ENCODE measurements at regions of chrX and their contacts with region 1.

Region 1: DNA sequence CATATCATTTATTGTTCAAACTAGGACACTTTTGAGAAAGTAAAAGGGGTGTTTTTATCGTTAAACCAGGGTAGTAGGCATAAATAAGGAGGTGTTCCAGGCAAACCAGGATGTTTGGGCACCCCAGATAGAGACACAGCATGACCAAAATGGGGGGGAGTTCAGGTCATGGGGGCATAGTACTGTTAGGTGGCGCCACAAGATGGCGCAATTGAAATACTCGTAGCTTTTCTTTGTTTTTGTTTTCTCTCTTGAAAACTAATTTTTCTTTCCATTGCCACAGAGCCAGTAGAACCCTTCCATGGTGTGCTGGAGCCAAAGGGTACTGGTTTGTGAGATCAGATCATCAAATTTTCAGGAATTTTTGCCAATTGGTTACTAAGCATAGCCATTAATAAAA is 283.4 kb downstream of the BCOR start:
- DNase-seq: no peak
- ATAC-seq: peak; percentile 25 to 40
- H3K4me3 ChIP-seq: no peak overlapping the region
- H3K27ac ChIP-seq: peak overlapping the region; percentile 52 to 74 (median 71)
- H3K4me1 ChIP-seq: peaks cover 5 to 6% of the 10 kb centered on the region in 2 donors
- H3K27me3 ChIP-seq: peaks cover 0 to 3% (median 0%) of the 10 kb centered on the region in 3 donors
- CTCF ChIP-seq: peak; percentile 23 to 55 (median 40)
- POLR2A ChIP-seq: no peak

Region 2: DNA sequence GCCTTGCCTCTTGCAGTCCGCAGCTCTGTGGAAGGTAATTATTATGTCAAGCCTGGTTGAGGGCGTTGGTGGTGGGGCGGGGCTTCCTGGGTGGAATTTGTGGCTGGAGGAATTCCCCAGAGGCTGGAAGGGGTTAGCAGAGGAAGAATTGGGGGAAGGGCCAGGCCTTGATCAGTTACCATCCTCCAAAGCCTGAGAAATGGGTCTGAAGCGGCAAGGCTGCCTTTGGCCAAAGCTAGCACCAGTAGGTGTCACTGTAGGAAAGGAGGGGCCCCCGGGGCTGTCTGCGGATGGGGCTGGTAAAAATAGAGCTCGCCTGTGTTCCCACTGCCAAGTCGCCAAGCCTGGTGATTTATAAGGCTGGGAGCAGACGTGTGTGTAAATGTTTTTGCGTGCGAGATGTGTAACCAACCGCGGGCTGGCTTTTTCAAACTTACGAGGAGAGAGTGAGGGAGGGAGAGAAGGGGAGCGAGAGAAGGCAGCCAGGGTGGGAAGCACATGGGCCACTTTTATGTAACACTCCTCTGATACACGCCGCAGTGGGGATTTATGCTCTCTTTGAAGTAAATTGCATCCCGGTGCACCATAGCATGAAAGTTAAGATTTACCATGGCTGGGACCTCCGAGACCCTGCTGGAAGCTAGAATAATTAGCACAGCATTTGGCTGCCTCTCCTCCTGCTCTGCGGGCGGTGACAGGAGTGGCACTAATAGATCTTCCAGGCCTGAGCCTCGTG is 83.6 kb before region 1 on chrX:
- in situ Hi-C with region 1: no loop called
- intact Hi-C with region 1: loop called (anchors 2 kb)
- DNase-seq: peak; percentile 52 to 68
- ATAC-seq: peak; percentile 91
- H3K4me3 ChIP-seq: no peak overlapping the region
- H3K27ac ChIP-seq: peak overlapping the region in 1 of 4 donors; percentile 24
- H3K4me1 ChIP-seq: peaks cover 3 to 7% of the 10 kb centered on the region in 2 donors
- H3K27me3 ChIP-seq: peaks cover 0 to 3% (median 0%) of the 10 kb centered on the region in 3 donors
- CTCF ChIP-seq: peak; percentile 38 to 72 (median 47)
- POLR2A ChIP-seq: no peak

Region 3: GRCh38 chrX:40013266-40014195 is 199.1 kb after region 1 on chrX:
- in situ Hi-C with region 1: no loop called
- intact Hi-C with region 1: loop called (anchors 5 kb)
- DNase-seq: peak; percentile 49 to 67
- ATAC-seq: peak; percentile 59 to 60
- H3K4me3 ChIP-seq: peak overlapping the region; percentile 61 to 79 (median 70)
- H3K27ac ChIP-seq: peak overlapping the region; percentile 92 to 95 (median 94)
- H3K4me1 ChIP-seq: peaks cover 0 to 7% of the 10 kb centered on the region in 2 donors
- H3K27me3 ChIP-seq: peaks cover 0 to 8% (median 7%) of the 10 kb centered on the region in 3 donors
- CTCF ChIP-seq: no peak
- POLR2A ChIP-seq: peak; percentile 69 to 77

Region 4: GRCh38 chrX:40169193-40170101 is 355.1 kb after region 1 on chrX:
- in situ Hi-C with region 1: loop called in 1 of 4 experiments (anchors 10 kb)
- intact Hi-C with region 1: no loop called
- DNase-seq: no peak
- ATAC-seq: no peak
- H3K4me3 ChIP-seq: peak overlapping the region in 1 of 4 donors; percentile 2
- H3K27ac ChIP-seq: no peak overlapping the region
- H3K4me1 ChIP-seq: peaks cover 2 to 19% of the 10 kb centered on the region in 2 donors
- H3K27me3 ChIP-seq: peaks cover 0 to 55% (median 29%) of the 10 kb centered on the region in 3 donors
- CTCF ChIP-seq: peak in 1 of 5 experiments; percentile 31
- POLR2A ChIP-seq: no peak

Region 5: DNA sequence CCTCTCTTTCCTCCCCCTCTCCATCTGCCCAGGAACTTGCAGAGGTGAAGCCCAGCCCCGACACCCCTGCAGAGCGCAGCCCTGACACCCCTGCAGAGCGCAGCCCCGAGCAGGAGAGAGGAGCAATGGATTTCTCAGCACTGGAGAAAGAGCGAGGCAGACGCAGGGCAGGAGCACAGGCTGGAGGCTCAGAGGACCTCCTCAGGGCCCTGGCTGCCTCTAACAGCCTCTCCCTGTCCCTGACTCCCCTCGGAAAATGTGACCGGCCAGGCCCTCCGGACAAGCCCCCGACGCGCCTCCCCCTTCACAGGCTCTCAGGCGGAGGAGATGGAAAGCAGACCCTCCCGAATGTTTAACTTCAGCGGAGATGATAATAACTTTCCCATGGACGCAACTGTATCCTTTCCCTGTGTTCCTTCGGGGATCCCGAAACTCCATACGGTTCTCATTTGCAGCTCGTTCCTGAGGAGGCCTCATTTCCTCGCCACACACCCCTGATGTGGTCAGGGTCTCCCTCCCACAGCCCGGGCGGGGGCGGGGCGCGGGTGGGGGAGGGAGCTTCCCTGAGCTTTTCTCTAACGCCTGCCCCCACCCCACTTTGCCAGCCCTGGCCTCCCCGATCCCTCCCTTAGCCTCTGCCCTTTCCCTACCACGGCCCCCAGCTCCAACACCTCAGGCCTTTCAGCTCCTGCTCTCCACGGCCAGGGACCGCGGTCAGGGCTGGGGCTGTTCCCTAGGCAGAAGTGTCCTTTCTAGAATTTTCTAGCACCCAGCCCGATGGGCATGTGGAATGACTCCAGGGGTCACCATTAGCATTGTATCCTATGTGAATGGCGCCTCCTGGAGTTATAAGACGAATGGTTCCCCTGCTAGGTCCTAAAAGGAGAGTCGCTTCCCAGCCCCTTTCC is 484.4 kb after region 1 on chrX:
- in situ Hi-C with region 1: loop called in 1 of 4 experiments (anchors 25 kb)
- intact Hi-C with region 1: no loop called
- DNase-seq: no peak
- ATAC-seq: no peak
- H3K4me3 ChIP-seq: no peak overlapping the region
- H3K27ac ChIP-seq: no peak overlapping the region
- H3K4me1 ChIP-seq: no peaks in the 10 kb centered on the region
- H3K27me3 ChIP-seq: no peaks in the 10 kb centered on the region
- CTCF ChIP-seq: no peak
- POLR2A ChIP-seq: no peak

Measured in gastrocnemius medialis (tissue), 4 donors.